ENCODE measurements at regions of chr14 and their contacts with region 1.

Region 1: GRCh38 chr14:54440873-54441868 is at the start of gene CNIH1:
- DNase-seq: peak; percentile 96
- ATAC-seq: peak; percentile 92
- H3K4me3 Mint-ChIP-seq: peak within 1 kb of the TSS; percentile 80
- H3K27ac Mint-ChIP-seq: peak within 1 kb of the TSS; percentile 99
- H3K4me1 Mint-ChIP-seq: peaks cover 47% of the 10 kb centered on the region
- H3K27me3 Mint-ChIP-seq: no peaks in the 10 kb centered on the region
- total RNA-seq, gene CNIH1: 86.6 to 109 TPM

Region 2: DNA sequence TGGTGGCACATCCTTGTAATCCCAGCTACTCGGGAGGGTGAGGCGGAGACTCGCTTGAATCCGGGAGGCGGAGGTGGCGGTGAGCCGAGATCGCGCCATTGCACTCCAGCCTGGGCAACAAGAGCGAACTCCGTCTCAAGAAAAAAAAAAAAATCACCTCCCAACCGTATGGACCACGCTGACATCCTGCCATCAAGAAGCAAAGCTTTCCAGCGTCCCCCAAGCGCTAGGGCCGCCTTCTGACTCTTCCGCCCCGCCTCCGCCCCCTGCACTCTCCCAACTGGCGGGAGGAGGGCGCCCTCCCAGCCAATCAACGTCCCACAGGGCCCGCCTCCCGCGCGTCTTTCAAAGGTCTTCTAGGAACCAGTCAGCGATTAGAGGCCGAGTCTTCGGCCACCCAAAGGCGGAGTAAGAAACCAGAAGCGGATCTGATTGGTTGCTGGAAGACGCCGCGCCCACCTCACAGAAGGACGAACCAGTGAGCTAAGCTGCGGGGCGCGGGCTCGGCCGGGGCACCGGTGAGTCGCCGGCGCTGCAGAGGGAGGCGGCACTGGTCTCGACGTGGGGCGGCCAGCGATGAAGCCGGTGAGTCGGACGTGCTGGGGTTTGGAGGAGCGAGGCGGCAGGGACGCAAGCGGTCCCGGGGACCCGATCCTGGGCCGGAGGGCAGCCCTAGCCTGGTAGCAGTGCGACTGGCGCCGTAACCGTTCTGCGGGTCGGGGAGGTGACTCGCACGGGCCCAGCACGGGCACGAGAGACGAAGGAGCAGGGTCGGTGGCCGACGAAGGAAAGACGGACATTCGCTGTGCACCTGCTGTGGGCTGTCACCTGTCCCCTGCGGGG is 44.5 kb before region 1 on chr14 and contains the start of gene CDKN3:
- CTCF ChIA-PET with region 1: interaction called, 3 read pairs
- POLR2A ChIA-PET with region 1: interaction called, 5 read pairs
- intact Hi-C with region 1: loop called (anchors 1 to 2 kb)
- DNase-seq: peak; percentile 98
- ATAC-seq: peak; percentile 97
- H3K4me3 Mint-ChIP-seq: peak within 1 kb of the TSS; percentile 82
- H3K27ac Mint-ChIP-seq: peak within 1 kb of the TSS; percentile 76
- H3K4me1 Mint-ChIP-seq: peaks cover 24% of the 10 kb centered on the region
- H3K27me3 Mint-ChIP-seq: no peaks in the 10 kb centered on the region
- total RNA-seq, gene CDKN3: 86.7 to 133 TPM

Region 3: DNA sequence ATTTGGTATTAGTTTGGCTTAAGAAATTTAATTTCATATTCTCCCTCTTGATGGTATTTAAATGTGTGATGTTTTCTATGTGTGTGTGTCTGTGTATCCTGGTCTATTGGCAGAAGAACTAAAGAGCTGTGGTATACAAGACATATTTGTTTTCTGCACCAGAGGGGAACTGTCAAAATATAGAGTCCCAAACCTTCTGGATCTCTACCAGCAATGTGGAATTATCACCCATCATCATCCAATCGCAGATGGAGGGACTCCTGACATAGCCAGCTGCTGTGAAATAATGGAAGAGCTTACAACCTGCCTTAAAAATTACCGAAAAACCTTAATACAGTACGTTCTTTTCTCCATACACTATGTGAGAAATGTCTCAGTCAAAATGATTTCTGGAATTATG is 29.8 kb before region 1 on chr14:
- CTCF ChIA-PET with region 1: no interaction called
- POLR2A ChIA-PET with region 1: no interaction called
- intact Hi-C with region 1: no loop called
- DNase-seq: no peak
- ATAC-seq: no peak
- H3K4me3 Mint-ChIP-seq: no peak overlapping the region
- H3K27ac Mint-ChIP-seq: no peak overlapping the region
- H3K4me1 Mint-ChIP-seq: no peaks in the 10 kb centered on the region
- H3K27me3 Mint-ChIP-seq: no peaks in the 10 kb centered on the region

Region 4: GRCh38 chr14:54488646-54489317 is 47.6 kb after region 1 on chr14 and contains the start of gene GMFB:
- CTCF ChIA-PET with region 1: interaction called, 6 read pairs
- POLR2A ChIA-PET with region 1: no interaction called
- intact Hi-C with region 1: loop called (anchors 1 to 2 kb)
- DNase-seq: peak; percentile 94
- ATAC-seq: peak; percentile 96
- H3K4me3 Mint-ChIP-seq: peak within 1 kb of the TSS; percentile 91
- H3K27ac Mint-ChIP-seq: peak within 1 kb of the TSS; percentile 96
- H3K4me1 Mint-ChIP-seq: peaks cover 56% of the 10 kb centered on the region
- H3K27me3 Mint-ChIP-seq: no peaks in the 10 kb centered on the region
- total RNA-seq, gene GMFB: 28.9 to 37.3 TPM

Region 5: DNA sequence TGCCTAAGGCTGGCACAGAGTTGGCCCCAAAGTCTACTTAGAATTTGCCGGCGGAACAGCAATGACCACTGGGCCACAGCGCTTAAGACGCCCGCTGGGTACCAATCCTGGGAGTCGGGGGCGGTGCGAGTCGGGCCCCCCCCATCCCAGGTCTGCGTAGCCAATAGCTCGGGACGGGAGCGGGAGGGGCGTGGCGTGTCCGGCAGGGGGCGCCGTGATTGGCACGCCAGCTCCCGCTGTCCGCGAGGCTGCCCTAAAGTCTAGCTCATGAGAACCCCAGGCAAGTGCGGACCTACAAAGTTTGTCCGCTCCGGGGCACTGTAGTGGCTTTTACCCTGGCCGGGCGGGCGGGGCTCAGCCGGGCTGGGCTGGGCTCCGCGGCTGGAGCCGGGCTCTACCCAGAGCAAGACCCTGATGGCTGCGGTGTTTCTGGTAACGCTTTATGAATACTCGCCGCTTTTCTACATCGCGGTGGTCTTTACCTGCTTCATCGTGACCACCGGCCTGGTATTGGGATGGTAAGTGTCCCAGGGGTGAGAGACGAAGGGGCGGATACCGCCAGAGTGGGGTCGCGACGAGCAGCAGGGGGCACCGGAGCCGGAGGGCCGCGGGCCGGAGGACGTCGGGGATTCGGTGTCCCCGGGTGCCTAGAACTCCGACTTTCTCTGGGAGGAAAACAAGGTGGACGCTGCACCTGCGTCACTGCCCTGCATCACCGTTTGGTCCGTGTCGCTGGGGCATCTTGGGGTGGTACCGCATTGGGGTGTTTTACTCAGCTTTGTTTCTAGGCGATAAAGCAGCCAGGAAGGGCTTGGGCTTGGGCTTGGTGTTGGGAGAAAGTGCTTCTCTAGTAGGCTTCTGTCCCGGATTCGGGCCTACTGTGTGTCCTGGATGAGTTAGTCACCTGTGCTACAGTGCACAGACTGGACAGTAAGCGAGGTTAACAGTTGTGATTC is 68.7 kb after region 1 on chr14 and contains the start of gene CGRRF1:
- CTCF ChIA-PET with region 1: interaction called, 5 read pairs
- POLR2A ChIA-PET with region 1: interaction called, 4 read pairs
- intact Hi-C with region 1: loop called (anchors 1 kb)
- DNase-seq: peak; percentile 98
- ATAC-seq: peak; percentile 99
- H3K4me3 Mint-ChIP-seq: peak within 1 kb of the TSS; percentile 92
- H3K27ac Mint-ChIP-seq: peak within 1 kb of the TSS; percentile 80
- H3K4me1 Mint-ChIP-seq: peaks cover 34% of the 10 kb centered on the region
- H3K27me3 Mint-ChIP-seq: no peaks in the 10 kb centered on the region
- total RNA-seq, gene CGRRF1: 10.2 to 15.2 TPM

Region 6: DNA sequence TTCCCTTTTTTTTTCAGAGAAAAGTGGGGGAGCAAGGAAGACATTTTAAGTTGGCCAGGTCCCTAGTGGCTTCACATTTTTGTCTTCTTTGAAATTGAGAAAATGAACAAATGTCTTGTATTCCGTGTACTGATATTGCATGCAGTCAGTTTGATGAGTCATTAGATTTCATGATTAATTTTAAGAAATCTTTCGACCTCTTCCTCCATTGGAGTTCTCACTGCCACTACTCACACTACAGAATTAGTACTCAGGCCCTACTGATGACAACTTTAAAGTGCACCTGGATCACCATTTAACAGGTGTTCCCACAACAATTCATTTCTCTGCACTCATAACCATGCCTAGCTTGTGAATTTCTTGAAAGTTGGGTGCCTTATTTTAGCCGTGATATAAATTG is 176.3 kb after region 1 on chr14:
- CTCF ChIA-PET with region 1: no interaction called
- POLR2A ChIA-PET with region 1: no interaction called
- intact Hi-C with region 1: no loop called
- DNase-seq: no peak
- ATAC-seq: peak; percentile 85
- H3K4me3 Mint-ChIP-seq: no peak overlapping the region
- H3K27ac Mint-ChIP-seq: no peak overlapping the region
- H3K4me1 Mint-ChIP-seq: peaks cover 15% of the 10 kb centered on the region
- H3K27me3 Mint-ChIP-seq: no peaks in the 10 kb centered on the region

Region 7: DNA sequence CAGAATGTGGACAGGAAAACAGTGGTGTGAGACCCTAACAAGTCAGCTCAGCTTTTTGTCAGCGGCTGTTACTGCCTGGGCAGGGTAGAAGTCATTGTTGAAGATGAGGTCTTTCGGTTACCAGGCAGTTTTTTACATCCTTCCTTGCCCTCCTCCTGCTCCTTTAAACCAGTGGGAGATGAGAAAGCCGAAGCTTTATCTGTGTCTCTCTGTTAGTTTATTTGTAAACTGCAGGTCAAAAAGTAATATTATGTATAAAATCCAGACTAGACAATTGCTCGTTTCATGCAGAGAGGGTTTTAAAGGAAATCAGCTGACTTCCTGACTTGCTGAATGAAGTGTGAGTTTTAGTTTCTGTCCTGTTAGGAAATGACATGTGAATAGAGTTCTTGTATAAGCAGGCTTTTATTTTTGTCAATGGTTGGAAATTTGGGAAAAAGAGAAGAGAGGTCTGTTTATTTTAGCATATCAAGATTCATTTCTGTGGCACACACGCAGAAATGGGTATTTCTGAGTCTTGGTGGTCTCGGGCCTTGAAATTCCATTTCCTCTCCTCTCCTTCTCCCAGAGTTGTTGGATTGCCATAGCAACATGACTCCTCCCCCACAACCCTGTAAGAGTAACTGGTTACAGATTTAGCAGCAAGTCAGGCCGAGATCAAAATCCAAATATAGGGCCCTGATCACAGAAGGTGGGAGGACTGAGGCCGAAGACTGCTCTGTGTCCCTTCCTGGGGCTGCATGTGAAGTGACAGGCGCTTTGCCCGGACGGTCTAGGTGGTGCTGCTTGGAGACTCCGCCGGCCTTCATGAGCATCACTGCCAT is 186.6 kb after region 1 on chr14:
- CTCF ChIA-PET with region 1: no interaction called
- POLR2A ChIA-PET with region 1: no interaction called
- intact Hi-C with region 1: loop called in 1 of 2 experiments (anchors 2 kb)
- DNase-seq: peak; percentile 50
- ATAC-seq: peak; percentile 74
- H3K4me3 Mint-ChIP-seq: peak overlapping the region; percentile 59
- H3K27ac Mint-ChIP-seq: peak overlapping the region; percentile 96
- H3K4me1 Mint-ChIP-seq: peaks cover 44% of the 10 kb centered on the region
- H3K27me3 Mint-ChIP-seq: no peaks in the 10 kb centered on the region

Region 8: DNA sequence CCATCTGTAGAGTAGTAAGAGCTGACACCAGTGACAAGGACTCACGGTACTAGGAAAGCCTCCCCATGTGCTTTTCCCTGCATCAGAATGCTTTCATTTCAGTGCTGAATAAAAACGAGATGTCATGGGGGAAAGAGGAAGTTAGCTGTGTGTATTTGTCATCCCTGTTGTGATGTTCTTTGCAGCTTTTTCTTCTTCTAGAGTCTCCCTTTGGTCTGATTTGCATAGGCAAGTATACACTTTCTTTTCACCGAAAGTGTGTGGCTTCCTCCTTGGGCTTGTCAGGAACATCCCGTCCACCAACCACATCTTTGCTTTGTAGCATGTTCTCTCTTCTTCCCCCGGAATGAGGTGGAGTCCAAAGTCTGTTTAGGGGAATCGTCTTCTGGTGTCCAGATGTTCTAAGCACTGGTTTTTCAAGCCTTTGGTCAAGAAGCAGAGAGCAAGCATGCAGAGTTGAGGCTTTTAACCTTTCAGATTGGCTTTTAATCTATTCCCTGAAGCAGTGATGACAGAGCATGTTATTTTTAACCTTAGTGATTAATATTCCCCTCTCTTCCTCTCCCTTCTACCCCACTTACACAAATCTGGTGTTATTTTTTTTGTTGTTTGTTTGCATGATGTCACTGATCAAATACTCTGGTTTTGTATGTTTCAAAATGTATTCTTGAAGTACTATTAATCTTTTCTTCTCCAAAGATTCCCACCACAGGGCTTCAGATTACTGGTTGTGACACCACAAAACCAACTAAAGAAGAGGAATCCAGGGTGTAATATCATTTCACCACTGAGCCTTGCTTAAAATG is 289.2 kb after region 1 on chr14:
- CTCF ChIA-PET with region 1: no interaction called
- POLR2A ChIA-PET with region 1: no interaction called
- intact Hi-C with region 1: loop called in 1 of 2 experiments (anchors 1 kb)
- DNase-seq: peak; percentile 61
- ATAC-seq: peak; percentile 93
- H3K4me3 Mint-ChIP-seq: peak overlapping the region; percentile 58
- H3K27ac Mint-ChIP-seq: peak overlapping the region; percentile 94
- H3K4me1 Mint-ChIP-seq: peaks cover 40% of the 10 kb centered on the region
- H3K27me3 Mint-ChIP-seq: peaks cover 18% of the 10 kb centered on the region

Region 9: DNA sequence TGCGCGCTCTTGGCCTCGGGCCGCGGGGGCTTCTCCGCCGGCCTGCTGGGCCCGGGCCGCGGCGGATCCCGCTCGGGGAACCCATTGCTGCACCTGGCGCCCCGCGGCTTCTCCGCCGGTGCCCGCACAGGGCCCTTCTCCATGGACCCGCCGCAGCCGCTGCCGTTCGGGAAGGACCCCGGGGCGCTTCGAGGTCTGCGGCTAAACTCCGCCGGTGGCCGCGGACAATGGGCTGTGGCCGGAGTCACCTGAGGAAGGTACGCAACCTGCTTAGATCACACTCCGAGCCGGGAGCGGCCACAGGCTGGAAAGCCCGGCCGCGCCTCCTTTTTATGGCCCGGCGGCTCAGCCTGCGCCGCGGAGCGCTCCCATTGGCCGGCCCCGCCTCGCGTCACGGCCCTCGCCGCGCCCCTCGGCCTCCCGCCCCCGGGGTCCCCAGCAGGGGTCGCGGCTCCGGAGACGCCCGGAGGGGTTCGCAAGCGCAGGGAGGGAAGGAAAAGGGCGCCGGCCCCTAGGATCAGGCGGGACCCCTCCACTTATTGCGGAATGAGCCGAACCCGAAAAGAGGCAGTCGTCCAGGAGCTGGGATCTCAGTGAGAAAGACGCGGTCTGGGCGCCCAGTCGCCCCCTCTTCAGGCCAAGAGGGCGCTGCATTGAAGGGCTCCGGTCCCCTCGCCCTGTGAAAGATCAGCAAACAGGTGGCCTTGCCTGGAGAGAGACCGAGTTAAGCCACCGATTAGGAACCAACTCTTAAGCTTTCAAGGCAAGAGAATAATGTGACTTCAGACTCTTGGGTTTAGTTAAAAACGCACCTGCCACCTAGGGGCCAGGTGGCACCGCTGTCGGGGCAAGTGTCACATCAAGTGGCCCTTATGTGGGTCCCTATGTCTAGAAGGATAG is 461.6 kb after region 1 on chr14 and contains the start of gene GCH1:
- CTCF ChIA-PET with region 1: no interaction called
- POLR2A ChIA-PET with region 1: no interaction called
- intact Hi-C with region 1: loop called in 1 of 2 experiments (anchors 5 kb)
- DNase-seq: peak; percentile 81
- ATAC-seq: peak; percentile 80
- H3K4me3 Mint-ChIP-seq: peak within 1 kb of the TSS; percentile 88
- H3K27ac Mint-ChIP-seq: peak within 1 kb of the TSS; percentile 90
- H3K4me1 Mint-ChIP-seq: peaks cover 26% of the 10 kb centered on the region
- H3K27me3 Mint-ChIP-seq: no peaks in the 10 kb centered on the region
- total RNA-seq, gene GCH1: 28.1 to 36.4 TPM